Lower leg skin (tissue), 4 donors: ENCODE measurements at regions of chr3 and their contacts with region 1.

Region 1: DNA sequence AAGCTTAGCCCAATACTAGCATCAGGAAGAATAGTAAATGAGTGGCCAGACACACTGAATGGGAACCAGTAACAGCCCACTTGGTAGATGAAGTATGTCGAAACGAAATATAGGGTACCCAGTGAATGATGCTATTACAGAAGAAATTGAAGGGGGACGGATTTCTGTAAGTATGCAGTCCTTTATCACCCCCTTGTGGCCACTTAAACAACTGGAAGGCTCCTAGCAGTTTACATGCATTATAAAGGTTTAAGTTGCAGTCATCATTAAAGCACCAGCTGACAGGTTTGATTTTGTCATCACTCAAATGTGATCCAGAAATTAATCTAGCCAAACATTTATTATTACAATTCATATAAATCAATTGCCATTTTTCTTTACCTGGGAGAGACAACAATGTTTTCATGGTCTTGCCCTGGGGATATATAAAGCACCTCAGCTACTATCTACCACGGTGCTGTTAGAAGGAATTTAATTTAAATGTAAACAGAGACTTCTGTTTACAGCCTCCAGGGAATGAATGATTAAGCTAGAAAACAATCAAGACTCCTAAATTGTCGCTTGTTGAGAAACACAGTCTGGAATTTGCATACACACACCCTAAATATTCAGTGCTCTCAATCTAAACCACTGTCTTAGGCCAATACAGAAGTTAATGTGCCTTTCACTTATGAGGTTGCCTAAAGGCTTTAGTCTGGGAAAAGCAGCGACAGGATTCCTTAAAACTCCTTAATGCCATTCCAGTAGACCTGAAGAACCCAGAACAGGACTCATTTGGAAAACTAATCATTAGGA is 7.8 kb downstream of the EIF1B start:
- DNase-seq: peak in 1 of 2 donors; percentile 36
- H3K4me3 ChIP-seq: no peak overlapping the region
- CTCF ChIP-seq: peak in 1 of 3 donors; percentile 70
- POLR2A ChIP-seq: no peak

Region 2: DNA sequence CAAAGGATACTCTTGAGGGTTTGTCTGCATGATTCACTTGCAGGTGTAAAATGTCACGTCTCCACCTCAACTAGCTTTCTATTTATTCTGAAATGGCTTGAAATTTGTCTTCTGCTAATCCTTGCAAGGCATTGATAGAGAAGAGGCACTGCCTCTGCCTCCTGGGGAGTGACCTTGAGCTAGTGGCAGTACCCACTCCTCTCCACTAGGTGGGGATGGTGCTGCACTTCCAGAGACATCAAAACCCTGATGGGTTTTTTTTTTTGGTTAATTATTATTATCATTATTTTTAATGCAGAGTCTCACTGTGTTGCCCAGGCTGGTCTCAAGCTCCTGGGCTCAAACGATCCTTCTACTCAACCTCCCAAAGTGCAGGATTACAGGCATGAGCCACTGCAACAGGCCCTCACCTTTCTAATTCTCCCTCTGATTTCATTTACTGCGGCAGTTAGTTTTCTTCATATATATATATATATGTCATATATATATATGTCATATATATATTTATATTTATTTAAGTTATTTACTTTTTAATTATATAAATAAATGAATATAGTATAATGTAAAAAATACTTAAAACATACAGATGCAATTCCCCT is 125.3 kb before region 1 on chr3:
- intact Hi-C with region 1: loop called (anchors 10 kb)
- DNase-seq: no peak
- H3K4me3 ChIP-seq: no peak overlapping the region
- CTCF ChIP-seq: peak in 1 of 3 donors; percentile 49
- POLR2A ChIP-seq: no peak

Region 3: GRCh38 chr3:40211579-40211978 is 105.7 kb before region 1 on chr3:
- intact Hi-C with region 1: no loop called
- DNase-seq: no peak
- H3K4me3 ChIP-seq: no peak overlapping the region
- CTCF ChIP-seq: no peak
- POLR2A ChIP-seq: no peak

Region 4: DNA sequence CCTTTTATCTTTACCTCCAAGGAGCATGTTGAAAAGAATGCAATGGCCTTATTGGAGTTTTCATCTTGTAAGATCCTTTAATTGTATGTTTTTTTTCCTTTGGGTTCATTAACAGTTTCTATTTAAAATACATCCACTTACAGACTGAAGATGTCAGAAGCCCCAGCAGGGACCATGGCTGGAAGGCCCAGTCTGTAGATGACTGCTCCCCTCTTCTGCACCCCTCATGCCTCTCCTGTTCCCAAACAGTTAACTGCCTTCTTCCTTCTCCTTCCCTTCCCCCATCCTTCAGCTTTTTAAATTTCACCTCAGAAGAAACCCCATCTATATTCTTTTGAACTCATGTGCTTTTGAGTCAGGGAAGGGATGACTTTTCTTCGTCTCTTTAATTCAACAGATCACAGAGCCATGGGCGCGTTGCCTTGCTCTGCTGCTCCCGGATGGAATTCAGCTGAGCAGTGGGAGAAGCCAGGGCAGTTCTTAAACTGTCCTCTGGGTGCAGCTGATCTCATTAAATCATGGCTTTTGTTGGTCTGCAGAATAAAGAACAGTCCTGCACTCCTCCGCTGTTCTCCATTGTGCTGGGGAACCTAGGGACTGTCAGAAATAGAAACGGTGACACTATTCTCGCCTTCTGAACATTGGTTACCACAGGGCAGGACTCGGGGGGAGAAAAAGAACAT is 79.2 kb before region 1 on chr3:
- intact Hi-C with region 1: no loop called
- DNase-seq: no peak
- H3K4me3 ChIP-seq: no peak overlapping the region
- CTCF ChIP-seq: no peak
- POLR2A ChIP-seq: no peak

Region 5: DNA sequence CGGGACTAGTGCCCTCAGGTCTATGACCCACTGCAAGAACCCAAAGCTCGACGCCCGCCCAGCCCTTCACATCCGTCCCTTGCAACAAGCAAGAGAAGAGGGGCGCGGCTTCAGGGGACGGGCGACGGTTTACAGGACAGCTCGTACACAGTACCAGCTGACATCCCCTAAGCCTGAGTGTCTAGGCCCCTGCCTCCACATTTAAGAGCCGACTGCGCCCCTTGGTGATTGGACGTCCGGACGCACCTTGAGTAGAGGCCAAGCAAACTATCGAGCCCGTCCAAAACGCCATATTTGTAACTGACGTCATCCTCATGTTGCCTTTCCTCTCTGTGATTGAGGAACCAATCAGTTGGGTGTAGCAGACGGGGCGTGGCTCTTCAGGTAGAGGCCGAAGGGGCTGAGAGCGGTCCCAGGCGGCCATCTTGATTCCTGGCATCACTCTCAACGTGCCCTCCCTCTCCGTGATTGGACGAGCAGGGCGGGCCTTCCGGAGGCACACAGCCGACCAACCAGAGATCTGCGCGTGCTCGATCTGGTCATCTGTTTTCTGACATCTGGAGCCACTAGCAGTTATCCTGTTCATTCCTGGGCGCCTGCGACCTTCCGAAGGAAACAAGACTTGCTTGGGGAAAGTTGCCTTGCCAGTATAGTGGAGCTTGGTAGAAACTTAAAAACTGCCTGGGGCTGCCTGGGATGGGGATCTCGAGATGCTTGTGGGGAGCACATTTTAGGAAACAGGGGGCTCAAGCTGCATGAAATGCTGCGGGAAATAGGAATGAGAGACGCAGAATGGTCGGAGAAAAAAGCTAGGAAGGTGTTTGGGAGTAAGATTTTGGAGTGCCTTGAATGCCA is 135.8 kb after region 1 on chr3:
- intact Hi-C with region 1: loop called (anchors 10 kb)
- DNase-seq: peak; percentile 99
- H3K4me3 ChIP-seq: peak overlapping the region; percentile 63
- CTCF ChIP-seq: no peak
- POLR2A ChIP-seq: no peak